Activated T-helper 1 cell treated with anti-CD3 and anti-CD28 coated beads, Interleukin-12 subunit alpha, Interleukin-12 subunit beta, Interleukin-2, Interleukin-4 antibody, amounts not matched to agents 30 ng/mL and 10 ng/mL and 1 ng/mL, durations not matched to agents 14 hours and 24 hours and 36 hours (primary cell): ENCODE measurements at regions of chrX and their contacts with region 1.

Region 1: DNA sequence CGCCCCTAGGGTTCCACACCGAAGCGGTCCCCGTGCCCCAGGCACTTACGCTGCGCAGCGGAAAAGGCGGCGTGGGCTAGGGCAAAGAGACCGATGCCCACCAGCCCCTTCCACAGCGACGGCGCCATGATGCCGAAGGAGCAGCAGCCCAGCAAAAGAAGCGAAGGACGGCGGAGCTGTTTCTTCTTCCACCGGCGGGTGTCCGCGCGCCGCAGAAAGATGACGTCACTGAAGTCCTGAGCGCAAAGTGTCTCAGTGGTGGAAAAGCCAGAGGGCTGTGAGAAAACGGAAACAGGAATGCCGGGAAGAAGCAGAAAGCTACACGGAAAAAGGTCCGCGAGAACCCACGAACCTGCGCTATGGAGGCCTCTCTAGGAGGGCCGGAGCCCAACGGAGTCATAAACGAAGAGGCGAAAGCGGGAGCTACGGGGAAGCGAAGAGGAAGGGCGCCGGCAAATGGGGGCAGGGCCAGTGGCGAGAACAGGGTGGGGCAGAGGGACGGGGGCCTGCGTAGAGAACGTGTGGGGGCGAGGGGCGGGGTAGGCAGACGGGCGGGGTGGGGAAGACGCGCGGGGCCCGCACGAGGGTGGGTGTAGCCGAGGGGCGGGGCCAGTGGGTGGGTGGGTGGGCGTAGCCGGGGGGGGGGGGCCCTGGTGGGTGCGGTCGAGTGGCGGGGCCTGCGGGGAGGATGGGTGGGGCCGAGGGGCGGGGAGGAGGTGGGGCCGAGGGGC is at the start of gene MMGT1:
- DNase-seq: peak; percentile 74
- H3K4me3 Mint-ChIP-seq: peak within 1 kb of the TSS; percentile 90
- H3K27ac Mint-ChIP-seq: peak within 1 kb of the TSS; percentile 91
- H3K4me1 Mint-ChIP-seq: peaks cover 40% of the 10 kb centered on the region
- H3K27me3 Mint-ChIP-seq: peaks cover 2% of the 10 kb centered on the region
- total RNA-seq, gene MMGT1: 25.2 and 26.4 TPM in 2 replicates

Region 2: GRCh38 chrX:135003876-135004623 is 969.7 kb before region 1 on chrX:
- intact Hi-C with region 1: loop called (anchors 5 kb)
- DNase-seq: peak; percentile 87
- H3K4me3 Mint-ChIP-seq: peak overlapping the region; percentile 87
- H3K27ac Mint-ChIP-seq: peak overlapping the region; percentile 62
- H3K4me1 Mint-ChIP-seq: peaks cover 14% of the 10 kb centered on the region
- H3K27me3 Mint-ChIP-seq: peaks cover under 1% of the 10 kb centered on the region

Region 3: GRCh38 chrX:135421537-135421931 is 552.2 kb before region 1 on chrX:
- intact Hi-C with region 1: loop called (anchors 5 kb)
- DNase-seq: peak; percentile 82
- H3K4me3 Mint-ChIP-seq: peak overlapping the region; percentile 73
- H3K27ac Mint-ChIP-seq: peak overlapping the region; percentile 29
- H3K4me1 Mint-ChIP-seq: peaks cover 4% of the 10 kb centered on the region
- H3K27me3 Mint-ChIP-seq: peaks cover 18% of the 10 kb centered on the region

Region 4: GRCh38 chrX:135951291-135951690 is 22.4 kb before region 1 on chrX:
- intact Hi-C with region 1: no loop called
- DNase-seq: no peak
- H3K4me3 Mint-ChIP-seq: no peak overlapping the region
- H3K27ac Mint-ChIP-seq: no peak overlapping the region
- H3K4me1 Mint-ChIP-seq: no peaks in the 10 kb centered on the region
- H3K27me3 Mint-ChIP-seq: no peaks in the 10 kb centered on the region

Region 5: DNA sequence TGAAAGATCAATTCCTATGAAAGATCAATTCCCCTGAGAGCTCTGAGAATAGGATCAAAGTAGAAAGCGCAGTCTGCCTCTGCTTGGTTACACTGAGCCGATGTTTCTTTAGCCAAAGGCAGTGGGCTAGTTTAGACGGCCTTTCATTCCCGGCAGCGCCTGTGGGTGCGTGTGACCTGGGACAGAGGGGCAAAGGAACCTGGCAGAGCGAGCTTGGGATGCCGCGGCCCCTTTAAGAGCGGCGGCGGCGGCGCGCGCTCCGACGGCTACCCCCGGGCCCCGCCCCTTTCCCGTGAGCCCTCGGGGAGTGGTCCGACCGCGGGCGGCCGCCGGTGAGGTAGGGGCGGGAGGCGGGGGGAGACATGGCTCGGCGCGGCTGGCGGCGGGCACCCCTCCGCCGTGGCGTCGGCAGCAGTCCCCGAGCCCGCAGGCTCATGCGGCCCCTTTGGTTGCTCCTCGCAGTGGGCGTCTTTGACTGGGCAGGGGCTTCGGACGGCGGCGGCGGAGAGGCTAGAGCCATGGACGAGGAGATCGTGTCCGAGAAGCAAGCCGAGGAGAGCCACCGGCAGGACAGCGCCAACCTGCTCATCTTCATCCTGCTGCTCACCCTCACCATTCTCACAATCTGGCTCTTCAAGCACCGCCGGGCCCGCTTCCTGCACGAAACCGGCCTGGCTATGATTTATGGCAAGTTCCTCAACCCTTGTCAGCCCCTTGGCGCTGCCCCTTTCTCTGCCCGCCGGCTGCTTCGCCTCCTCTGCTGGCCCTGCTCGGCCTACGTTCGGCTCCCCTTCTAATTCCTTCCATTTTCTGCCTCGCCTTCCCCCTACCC is 11.6 kb after region 1 on chrX and contains the start of gene SLC9A6:
- intact Hi-C with region 1: loop called (anchors 1 kb)
- DNase-seq: peak; percentile 59
- H3K4me3 Mint-ChIP-seq: peak within 1 kb of the TSS; percentile 92
- H3K27ac Mint-ChIP-seq: peak within 1 kb of the TSS; percentile 86
- H3K4me1 Mint-ChIP-seq: peaks cover 52% of the 10 kb centered on the region
- H3K27me3 Mint-ChIP-seq: no peaks in the 10 kb centered on the region
- total RNA-seq, gene SLC9A6: 12.7 and 13.4 TPM in 2 replicates

Region 6: DNA sequence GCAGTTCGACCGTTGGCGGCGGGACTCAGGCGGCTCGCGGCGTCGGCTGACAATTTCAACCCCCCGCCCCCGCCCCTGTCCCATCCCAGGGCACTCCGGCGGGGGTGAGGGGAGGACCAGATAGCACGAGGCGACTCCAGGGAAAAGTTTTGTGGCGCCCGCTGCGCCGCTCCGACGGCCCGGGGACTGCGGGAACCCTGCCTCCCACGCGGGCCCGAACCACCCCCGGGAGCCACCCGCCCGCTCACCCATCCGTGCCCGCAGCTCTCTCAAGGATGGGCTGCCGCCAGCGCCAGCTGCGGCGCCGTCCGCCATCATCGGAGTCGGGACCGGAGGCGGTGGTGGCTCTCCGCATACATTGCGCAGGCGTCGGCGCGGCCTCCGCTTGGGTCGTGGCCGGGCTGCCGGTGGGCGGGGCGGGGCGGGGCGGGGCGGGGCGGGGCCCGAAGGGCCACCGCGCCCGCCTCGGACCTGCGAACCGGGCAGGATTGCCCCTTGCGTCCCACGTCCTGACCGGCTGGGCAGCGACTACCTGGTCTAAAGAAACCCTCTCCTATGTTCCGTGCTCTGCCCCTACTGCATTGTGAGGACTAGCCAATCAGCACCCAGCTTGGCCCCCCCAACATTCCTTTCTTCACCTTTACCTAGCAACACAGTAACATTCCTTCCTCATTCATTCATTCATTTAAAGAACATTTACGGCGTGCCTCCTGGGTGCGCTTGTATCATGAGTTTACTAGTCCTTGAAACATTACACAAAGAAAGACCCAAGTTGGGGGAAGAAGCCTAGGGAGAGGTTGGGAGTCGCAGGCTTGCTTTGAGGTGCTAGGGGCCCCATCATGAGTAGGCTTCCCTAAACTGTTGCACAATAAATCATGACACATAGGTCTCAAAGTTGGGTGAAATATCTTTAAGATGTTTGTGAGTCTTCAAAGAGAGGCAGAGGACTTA is 277.6 kb after region 1 on chrX and contains the start of gene MAP7D3:
- intact Hi-C with region 1: loop called (anchors 2 kb)
- DNase-seq: peak; percentile 61
- H3K4me3 Mint-ChIP-seq: peak within 1 kb of the TSS; percentile 87
- H3K27ac Mint-ChIP-seq: peak within 1 kb of the TSS; percentile 94
- H3K4me1 Mint-ChIP-seq: peaks cover 16% of the 10 kb centered on the region
- H3K27me3 Mint-ChIP-seq: no peaks in the 10 kb centered on the region
- total RNA-seq, gene MAP7D3: 27.3 and 29.1 TPM in 2 replicates